Naive thymus-derived CD4-positive, alpha-beta T cell (primary cell): ENCODE measurements at regions of chr1 and their contacts with region 1.

Region 1: GRCh38 chr1:162878000-162878596 is 17.1 kb upstream of the CCDC190 start:
- DNase-seq: no peak
- ATAC-seq: no peak
- H3K4me3 ChIP-seq: no peak overlapping the region
- H3K4me3 Mint-ChIP-seq: no peak overlapping the region
- H3K27ac ChIP-seq: no peak overlapping the region
- H3K27ac Mint-ChIP-seq: no peak overlapping the region
- H3K4me1 ChIP-seq: no peaks in the 10 kb centered on the region
- H3K4me1 Mint-ChIP-seq: peaks cover 0 to 2% (median 0%) of the 10 kb centered on the region in 7 donors
- H3K27me3 ChIP-seq: no peaks in the 10 kb centered on the region
- H3K27me3 Mint-ChIP-seq: peaks cover 19 to 53% (median 41%) of the 10 kb centered on the region in 5 donors

Region 2: DNA sequence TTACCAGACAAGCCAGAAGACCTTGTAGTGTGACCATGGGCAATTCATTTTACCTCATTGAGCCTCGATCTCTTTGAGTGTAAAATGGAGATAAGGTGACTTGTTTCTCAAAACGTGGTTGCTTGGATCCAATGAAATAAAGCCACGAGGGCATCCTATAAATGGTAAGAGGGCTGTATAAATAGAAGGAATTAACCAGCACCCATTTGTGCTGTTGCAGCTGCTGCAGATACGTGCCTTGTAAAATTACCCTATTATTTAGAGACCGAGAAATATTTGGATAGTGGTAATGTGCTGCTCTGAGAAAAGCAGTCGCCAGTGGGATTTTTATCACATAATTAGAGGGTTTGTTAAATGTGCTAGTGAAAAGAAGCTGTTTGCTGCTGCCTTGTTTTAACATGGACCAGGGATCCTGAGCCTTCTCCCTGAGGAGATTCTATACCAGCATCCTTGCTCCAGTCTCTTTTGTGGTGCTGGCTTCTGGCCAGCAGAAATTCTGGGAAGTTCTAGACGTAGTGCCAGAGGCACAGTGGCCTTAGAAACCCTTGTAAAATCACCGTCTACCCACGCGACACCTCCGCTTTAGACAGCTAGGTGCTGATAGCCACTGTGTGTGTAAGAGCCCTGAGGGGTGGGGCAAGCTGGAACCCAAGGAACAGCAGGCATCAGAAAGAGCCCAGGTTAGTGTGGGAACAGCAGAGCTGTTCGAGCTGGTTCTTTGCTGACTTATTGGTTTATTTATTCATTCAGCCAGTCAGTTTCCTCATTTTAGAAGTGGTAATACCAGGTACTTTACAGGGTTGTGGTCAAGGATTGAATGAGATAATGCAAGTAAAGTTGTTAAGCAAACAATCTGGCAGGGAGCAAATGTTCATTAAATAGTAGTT is 671.1 kb before region 1 on chr1:
- CTCF ChIA-PET with region 1: no interaction called
- POLR2A ChIA-PET with region 1: no interaction called
- intact Hi-C with region 1: no loop called
- DNase-seq: no peak
- ATAC-seq: no peak
- H3K4me3 ChIP-seq: no peak overlapping the region
- H3K4me3 Mint-ChIP-seq: no peak overlapping the region
- H3K27ac ChIP-seq: no peak overlapping the region
- H3K27ac Mint-ChIP-seq: no peak overlapping the region
- H3K4me1 ChIP-seq: no peaks in the 10 kb centered on the region
- H3K4me1 Mint-ChIP-seq: no peaks in the 10 kb centered on the region
- H3K27me3 ChIP-seq: peaks cover 0 to 3% of the 10 kb centered on the region in 2 donors
- H3K27me3 Mint-ChIP-seq: peaks cover 17 to 40% (median 32%) of the 10 kb centered on the region in 5 donors

Region 3: GRCh38 chr1:162822391-162823200 is 55.5 kb before region 1 on chr1:
- CTCF ChIA-PET with region 1: no interaction called
- POLR2A ChIA-PET with region 1: no interaction called
- intact Hi-C with region 1: loop called in 1 of 2 experiments (anchors 10 kb)
- DNase-seq: peak in 1 of 9 donors; percentile 0
- ATAC-seq: peak; percentile 45
- H3K4me3 ChIP-seq: peak overlapping the region; percentile 3
- H3K4me3 Mint-ChIP-seq: peak overlapping the region in 9 of 10 donors; percentile 17 to 69 (median 57)
- H3K27ac ChIP-seq: no peak overlapping the region
- H3K27ac Mint-ChIP-seq: no peak overlapping the region
- H3K4me1 ChIP-seq: peaks cover 5 to 9% of the 10 kb centered on the region in 2 donors
- H3K4me1 Mint-ChIP-seq: peaks cover 6 to 19% (median 12%) of the 10 kb centered on the region in 7 donors
- H3K27me3 ChIP-seq: peaks cover 0 to 12% of the 10 kb centered on the region in 2 donors
- H3K27me3 Mint-ChIP-seq: peaks cover 43 to 54% (median 46%) of the 10 kb centered on the region in 5 donors

Region 4: DNA sequence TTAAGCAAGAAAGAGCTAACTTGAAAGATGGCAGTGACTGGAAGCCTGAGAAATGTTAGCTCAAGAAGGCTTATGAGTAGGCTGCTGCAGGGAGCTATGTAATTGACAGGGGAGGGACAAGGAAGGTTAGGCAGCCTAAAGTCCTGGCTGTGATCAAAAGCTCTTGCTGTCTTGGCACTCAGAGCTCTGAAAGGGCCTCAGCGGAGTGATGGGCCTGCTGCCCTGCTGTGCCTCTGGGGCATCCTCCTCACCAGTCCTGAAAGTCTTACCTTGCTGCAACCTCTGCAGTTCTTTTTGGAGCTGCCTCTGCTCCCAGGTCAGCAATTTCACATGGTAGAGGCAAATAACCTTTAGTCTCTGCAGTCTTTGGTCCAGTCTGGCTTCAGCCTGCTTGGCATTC is 18.9 kb before region 1 on chr1:
- CTCF ChIA-PET with region 1: no interaction called
- POLR2A ChIA-PET with region 1: no interaction called
- intact Hi-C with region 1: no loop called
- DNase-seq: no peak
- ATAC-seq: no peak
- H3K4me3 ChIP-seq: no peak overlapping the region
- H3K4me3 Mint-ChIP-seq: no peak overlapping the region
- H3K27ac ChIP-seq: no peak overlapping the region
- H3K27ac Mint-ChIP-seq: no peak overlapping the region
- H3K4me1 ChIP-seq: no peaks in the 10 kb centered on the region
- H3K4me1 Mint-ChIP-seq: peaks cover 0 to 2% (median 0%) of the 10 kb centered on the region in 7 donors
- H3K27me3 ChIP-seq: no peaks in the 10 kb centered on the region
- H3K27me3 Mint-ChIP-seq: peaks cover 17 to 23% (median 20%) of the 10 kb centered on the region in 5 donors

Region 5: DNA sequence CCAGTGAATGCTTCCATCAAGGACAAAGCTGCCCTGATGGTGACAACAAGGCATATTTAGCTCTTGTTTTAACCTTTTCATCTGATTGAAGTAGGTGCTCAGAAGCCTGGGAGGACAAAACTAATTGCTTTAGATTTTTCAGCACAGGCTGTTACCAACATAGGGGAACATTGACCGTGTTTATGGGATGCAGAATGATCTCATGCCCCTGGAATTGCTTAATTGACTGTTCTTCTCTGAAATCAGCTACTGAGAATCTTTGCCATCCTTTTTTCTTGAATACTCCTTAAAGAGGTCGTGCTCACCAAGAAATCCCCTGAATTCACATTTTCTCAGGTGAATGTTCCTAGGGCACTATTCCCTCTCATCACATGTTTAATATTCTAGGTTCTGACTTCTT is 78.8 kb after region 1 on chr1:
- CTCF ChIA-PET with region 1: no interaction called
- POLR2A ChIA-PET with region 1: no interaction called
- intact Hi-C with region 1: no loop called
- DNase-seq: no peak
- ATAC-seq: no peak
- H3K4me3 ChIP-seq: no peak overlapping the region
- H3K4me3 Mint-ChIP-seq: no peak overlapping the region
- H3K27ac ChIP-seq: no peak overlapping the region
- H3K27ac Mint-ChIP-seq: no peak overlapping the region
- H3K4me1 ChIP-seq: no peaks in the 10 kb centered on the region
- H3K4me1 Mint-ChIP-seq: peaks cover 0 to 2% (median 0%) of the 10 kb centered on the region in 7 donors
- H3K27me3 ChIP-seq: no peaks in the 10 kb centered on the region
- H3K27me3 Mint-ChIP-seq: peaks cover 4 to 26% (median 14%) of the 10 kb centered on the region in 5 donors